Sigmoid colon (tissue), 7 donors: ENCODE measurements at regions of chr3 and their contacts with region 1.

Region 1: GRCh38 chr3:111859974-111860859 is 1.2 kb downstream of the PHLDB2 start:
- DNase-seq: peak; percentile 93
- H3K4me3 ChIP-seq: peak overlapping the region; percentile 69 to 97 (median 88)
- H3K27ac ChIP-seq: peak overlapping the region; percentile 95 to 99 (median 99)
- H3K4me1 ChIP-seq: peaks cover 0 to 61% (median 43%) of the 10 kb centered on the region in 4 donors
- H3K27me3 ChIP-seq: no peaks in the 10 kb centered on the region
- CTCF ChIP-seq: peak; percentile 52 to 64 (median 54)
- EP300 ChIP-seq: no peak
- POLR2A ChIP-seq: peak; percentile 38 to 43

Region 2: GRCh38 chr3:111737706-111738086 is 122.5 kb before region 1 on chr3:
- intact Hi-C with region 1: loop called (anchors 2 kb)
- DNase-seq: peak; percentile 86
- H3K4me3 ChIP-seq: no peak overlapping the region
- H3K27ac ChIP-seq: peak overlapping the region; percentile 71 to 83 (median 76)
- H3K4me1 ChIP-seq: peaks cover 0 to 48% (median 42%) of the 10 kb centered on the region in 4 donors
- H3K27me3 ChIP-seq: no peaks in the 10 kb centered on the region
- CTCF ChIP-seq: no peak
- EP300 ChIP-seq: no peak
- POLR2A ChIP-seq: no peak

Region 3: DNA sequence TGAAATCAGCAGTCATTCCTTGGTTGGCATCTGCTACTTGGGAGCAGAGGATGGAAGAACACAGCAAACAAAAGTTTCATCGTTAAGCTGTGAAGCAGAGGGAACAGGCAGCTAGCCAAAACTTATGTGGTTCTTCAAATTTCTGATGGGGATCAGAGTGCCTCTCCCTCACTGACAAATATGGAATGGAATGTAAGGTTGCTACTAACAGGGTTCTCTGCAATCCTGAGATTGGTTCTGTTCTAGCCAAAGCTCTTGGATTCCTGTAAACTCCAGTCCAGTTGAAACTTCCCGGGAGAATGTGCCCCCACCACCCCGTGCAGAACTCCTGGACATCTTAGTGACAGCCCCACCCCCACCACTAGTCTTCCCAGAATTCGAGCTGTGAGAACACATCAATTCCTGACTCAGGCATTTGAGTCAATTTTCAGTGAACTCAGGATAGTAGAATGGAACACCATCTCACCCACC is 57.1 kb before region 1 on chr3:
- intact Hi-C with region 1: loop called (anchors 5 kb)
- DNase-seq: peak; percentile 90
- H3K4me3 ChIP-seq: no peak overlapping the region
- H3K27ac ChIP-seq: peak overlapping the region; percentile 74 to 82 (median 79)
- H3K4me1 ChIP-seq: peaks cover 0 to 38% (median 36%) of the 10 kb centered on the region in 4 donors
- H3K27me3 ChIP-seq: no peaks in the 10 kb centered on the region
- CTCF ChIP-seq: no peak
- EP300 ChIP-seq: peak in 2 of 4 donors; percentile 10 to 39
- POLR2A ChIP-seq: no peak

Region 4: DNA sequence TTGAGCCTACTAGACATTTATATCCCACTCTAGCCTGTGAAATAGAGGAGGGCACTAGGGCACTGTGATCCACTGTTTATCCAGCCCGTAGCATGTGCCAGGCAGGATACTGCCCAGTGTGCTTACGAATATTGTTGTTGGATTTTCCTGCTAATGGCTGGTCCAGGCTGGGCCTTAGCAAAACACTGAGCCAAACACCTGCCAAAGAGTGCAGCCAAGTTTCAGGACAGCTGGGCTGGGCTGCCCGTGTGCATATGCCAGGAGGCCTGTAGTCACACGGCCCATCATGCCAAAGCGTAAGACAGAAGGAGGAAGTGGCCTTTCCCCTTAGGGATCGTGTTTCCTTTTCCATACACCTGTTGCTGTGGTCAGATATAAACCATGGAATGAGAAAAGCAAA is 64.1 kb after region 1 on chr3:
- intact Hi-C with region 1: loop called (anchors 5 kb)
- DNase-seq: peak; percentile 93
- H3K4me3 ChIP-seq: no peak overlapping the region
- H3K27ac ChIP-seq: peak overlapping the region; percentile 55 to 77 (median 66)
- H3K4me1 ChIP-seq: peaks cover 0 to 70% (median 37%) of the 10 kb centered on the region in 4 donors
- H3K27me3 ChIP-seq: no peaks in the 10 kb centered on the region
- CTCF ChIP-seq: no peak
- EP300 ChIP-seq: peak in 2 of 4 donors; percentile 63 to 71
- POLR2A ChIP-seq: no peak

Region 5: DNA sequence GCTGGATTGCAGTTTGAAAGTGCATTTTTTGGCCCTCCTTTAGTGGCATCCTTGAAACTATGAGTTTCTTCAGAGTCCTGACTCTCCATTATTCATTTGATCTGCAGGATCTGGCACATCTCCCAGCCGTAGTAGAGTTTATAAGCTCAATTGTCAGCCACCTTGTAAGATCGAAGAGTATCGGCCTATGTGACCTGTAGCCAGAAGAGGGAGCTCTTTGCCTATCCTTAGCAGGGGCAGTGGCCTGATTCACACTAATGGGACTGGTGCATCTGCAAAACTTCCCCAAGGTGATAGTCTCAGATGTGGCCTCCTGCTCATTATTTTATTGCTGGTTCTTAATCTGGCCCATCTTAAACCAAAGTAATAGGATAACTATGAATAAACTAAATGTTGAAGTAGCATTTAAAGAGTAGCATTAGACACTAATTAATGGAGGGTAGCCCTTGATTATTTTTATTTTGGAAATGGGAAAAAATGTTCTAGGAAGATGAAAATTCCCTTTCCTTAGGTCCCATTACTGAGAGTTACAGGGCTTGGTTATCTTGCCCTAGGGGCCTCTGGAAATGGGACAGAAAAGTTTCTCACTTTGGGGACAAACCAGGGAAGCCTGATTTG is 251.7 kb after region 1 on chr3:
- intact Hi-C with region 1: no loop called
- DNase-seq: no peak
- H3K4me3 ChIP-seq: no peak overlapping the region
- H3K27ac ChIP-seq: no peak overlapping the region
- H3K4me1 ChIP-seq: no peaks in the 10 kb centered on the region
- H3K27me3 ChIP-seq: no peaks in the 10 kb centered on the region
- CTCF ChIP-seq: peak in 3 of 4 experiments; percentile 19 to 49 (median 40)
- EP300 ChIP-seq: no peak
- POLR2A ChIP-seq: no peak